CD4-positive, alpha-beta T cell (primary cell): ENCODE measurements at regions of chr2 and their contacts with region 1.

Region 1: DNA sequence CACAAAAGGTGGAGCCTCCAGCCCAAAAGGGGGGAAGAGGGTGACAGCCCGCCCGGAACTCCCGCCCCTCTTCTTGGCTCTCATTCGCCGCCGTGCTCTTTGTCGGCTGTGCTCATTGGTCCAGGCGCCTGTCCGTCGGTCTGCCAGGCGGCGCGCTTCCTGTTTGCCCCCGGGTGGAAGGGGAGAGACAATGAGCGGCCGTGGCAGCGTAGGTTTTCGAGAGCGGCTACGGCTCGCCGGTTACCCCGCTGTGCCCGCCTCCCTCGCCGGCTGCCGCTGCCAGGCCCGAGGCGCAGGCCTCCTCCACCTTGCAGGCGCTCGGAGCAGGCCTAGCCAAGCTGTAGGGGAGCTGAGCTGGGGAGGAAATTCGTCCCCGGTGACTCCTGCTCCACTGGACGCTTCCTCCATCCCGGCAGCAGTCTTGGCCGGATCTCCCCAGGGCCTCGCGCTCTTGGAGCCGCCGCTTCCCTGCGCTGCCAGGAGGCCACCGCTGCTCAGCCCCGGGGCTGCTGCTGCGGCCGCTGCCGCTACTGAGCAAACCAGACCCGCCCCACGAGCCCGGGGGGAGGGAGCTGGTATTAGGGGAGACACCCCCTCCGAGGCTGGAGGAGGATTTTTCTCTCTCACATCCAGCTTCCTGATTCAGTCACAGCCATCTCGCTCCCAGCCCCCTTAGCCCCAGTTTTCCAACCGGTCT is at the start of gene SP3:
- DNase-seq: peak; percentile 91 to 98 (median 95)
- ATAC-seq: peak; percentile 65
- H3K4me3 ChIP-seq: peak within 1 kb of the TSS; percentile 85
- H3K4me3 Mint-ChIP-seq: peak within 1 kb of the TSS; percentile 99
- H3K27ac ChIP-seq: peak within 1 kb of the TSS; percentile 95 to 99
- H3K27ac Mint-ChIP-seq: peak within 1 kb of the TSS; percentile 98
- H3K4me1 ChIP-seq: peaks cover 14% of the 10 kb centered on the region
- H3K4me1 Mint-ChIP-seq: peaks cover 45% of the 10 kb centered on the region
- H3K27me3 ChIP-seq: no peaks in the 10 kb centered on the region
- H3K27me3 Mint-ChIP-seq: no peaks in the 10 kb centered on the region
- CTCF ChIP-seq: no peak
- total RNA-seq, gene SP3: 159 to 166 TPM

Region 2: GRCh38 chr2:173914055-173914934 is 51.2 kb before region 1 on chr2:
- CTCF ChIA-PET with region 1: no interaction called
- POLR2A ChIA-PET with region 1: no interaction called
- intact Hi-C with region 1: loop called in 1 of 2 experiments (anchors 5 kb)
- DNase-seq: no peak
- ATAC-seq: no peak
- H3K4me3 ChIP-seq: no peak overlapping the region
- H3K4me3 Mint-ChIP-seq: no peak overlapping the region
- H3K27ac ChIP-seq: no peak overlapping the region
- H3K27ac Mint-ChIP-seq: peak overlapping the region; percentile 27
- H3K4me1 ChIP-seq: no peaks in the 10 kb centered on the region
- H3K4me1 Mint-ChIP-seq: peaks cover 40% of the 10 kb centered on the region
- H3K27me3 ChIP-seq: no peaks in the 10 kb centered on the region
- H3K27me3 Mint-ChIP-seq: no peaks in the 10 kb centered on the region
- CTCF ChIP-seq: no peak

Region 3: GRCh38 chr2:173929441-173929840 is 36.0 kb before region 1 on chr2:
- CTCF ChIA-PET with region 1: interaction called, 4 read pairs
- POLR2A ChIA-PET with region 1: interaction called, 3 read pairs
- intact Hi-C with region 1: loop called in 1 of 2 experiments (anchors 2 kb)
- DNase-seq: no peak
- ATAC-seq: no peak
- H3K4me3 ChIP-seq: no peak overlapping the region
- H3K4me3 Mint-ChIP-seq: peak overlapping the region; percentile 5
- H3K27ac ChIP-seq: no peak overlapping the region
- H3K27ac Mint-ChIP-seq: peak overlapping the region; percentile 57
- H3K4me1 ChIP-seq: peaks cover 43% of the 10 kb centered on the region
- H3K4me1 Mint-ChIP-seq: peaks cover 78% of the 10 kb centered on the region
- H3K27me3 ChIP-seq: no peaks in the 10 kb centered on the region
- H3K27me3 Mint-ChIP-seq: no peaks in the 10 kb centered on the region
- CTCF ChIP-seq: no peak

Region 4: DNA sequence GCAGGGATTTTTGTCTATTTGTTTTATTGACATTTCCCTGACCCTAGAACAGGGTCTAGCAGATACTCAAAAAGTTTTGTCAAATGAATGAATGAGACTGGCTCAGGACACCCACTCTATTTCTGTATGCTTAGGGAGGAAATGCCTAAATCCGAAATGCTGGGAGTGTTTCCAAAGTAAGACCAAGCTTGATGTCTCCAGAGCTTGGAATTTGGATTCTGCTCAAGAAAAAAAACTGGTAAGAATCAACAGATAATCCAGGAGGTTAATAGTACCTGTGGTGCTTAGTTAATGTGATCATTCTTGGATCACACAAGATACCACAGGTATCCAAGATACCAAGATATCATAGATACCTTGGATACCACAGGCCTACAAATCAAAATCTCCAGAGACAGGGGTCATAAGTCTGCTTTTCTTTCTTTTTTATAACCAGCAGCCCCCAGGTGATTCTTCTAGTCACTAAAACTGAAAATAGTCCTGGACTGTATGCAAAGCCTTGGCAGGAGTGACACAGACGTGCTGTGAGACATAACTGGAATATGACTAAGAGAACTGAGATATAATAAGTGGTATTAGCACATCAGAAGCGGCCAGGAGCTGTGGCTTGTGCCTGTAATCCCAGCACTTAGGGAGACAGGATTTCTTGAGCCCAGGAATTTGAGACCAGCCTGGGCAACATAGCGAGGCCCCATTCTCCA is 39.6 kb after region 1 on chr2:
- CTCF ChIA-PET with region 1: no interaction called
- POLR2A ChIA-PET with region 1: no interaction called
- intact Hi-C with region 1: no loop called
- DNase-seq: no peak
- ATAC-seq: no peak
- H3K4me3 ChIP-seq: no peak overlapping the region
- H3K4me3 Mint-ChIP-seq: no peak overlapping the region
- H3K27ac ChIP-seq: no peak overlapping the region
- H3K27ac Mint-ChIP-seq: no peak overlapping the region
- H3K4me1 ChIP-seq: no peaks in the 10 kb centered on the region
- H3K4me1 Mint-ChIP-seq: no peaks in the 10 kb centered on the region
- H3K27me3 ChIP-seq: no peaks in the 10 kb centered on the region
- H3K27me3 Mint-ChIP-seq: peaks cover 10% of the 10 kb centered on the region
- CTCF ChIP-seq: no peak